Common myeloid progenitor, CD34-positive (primary cell): ENCODE measurements at regions of chr10 and their contacts with region 1.

Region 1: DNA sequence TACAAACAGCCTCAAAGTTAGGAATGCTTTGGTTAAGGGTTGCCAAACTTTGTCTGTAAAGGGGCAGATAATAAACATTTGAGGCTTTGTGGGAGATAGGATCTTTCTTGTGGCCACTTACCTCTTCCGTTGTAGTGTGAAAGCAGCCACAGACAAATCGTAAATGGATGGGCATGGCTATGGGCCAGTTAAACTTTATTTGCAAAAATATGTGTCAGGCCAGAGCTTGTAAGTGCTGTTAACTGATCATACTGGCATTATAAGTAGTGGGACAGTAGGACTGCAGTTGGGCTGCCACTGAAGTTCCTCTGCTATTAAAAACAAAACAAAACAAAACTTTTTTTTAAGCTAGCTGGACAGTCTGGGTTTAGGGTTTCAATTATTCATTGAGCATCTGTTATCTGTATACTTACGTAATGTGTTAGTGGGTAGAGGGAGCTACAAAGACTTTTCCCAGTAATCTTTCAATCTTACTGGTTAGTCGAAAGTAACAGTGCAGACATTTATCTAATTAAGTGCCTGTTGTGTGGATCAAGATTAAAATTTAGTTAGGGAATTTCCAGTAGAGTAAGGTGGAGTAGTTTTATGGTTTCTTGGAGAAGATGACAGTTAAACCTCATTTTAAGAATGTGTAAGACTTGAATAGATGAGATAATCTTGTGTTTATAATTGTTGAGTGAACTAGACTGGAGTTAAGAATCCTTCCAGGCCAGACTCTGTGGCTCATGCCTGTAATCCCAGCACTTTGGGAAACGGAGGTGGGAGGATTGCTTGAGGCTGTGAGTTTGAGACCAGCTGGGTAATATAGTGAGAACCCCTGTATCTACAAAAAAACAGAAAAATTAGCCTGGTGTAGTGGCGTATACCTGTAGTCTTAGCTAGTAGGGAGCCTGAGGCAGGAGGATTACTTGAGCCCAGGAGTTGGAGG is 100.1 kb downstream of the BTRC start:
- DNase-seq: peak; percentile 74 to 90 (median 87)
- H3K4me3 ChIP-seq: peak overlapping the region in 1 of 7 experiments; percentile 8
- H3K27ac ChIP-seq: no peak overlapping the region
- H3K4me1 ChIP-seq: peaks cover 13 to 32% (median 18%) of the 10 kb centered on the region in 4 experiments
- H3K27me3 ChIP-seq: peaks cover 0 to 65% (median 15%) of the 10 kb centered on the region in 5 experiments

Region 2: GRCh38 chr10:101467286-101467770 is 13.3 kb after region 1 on chr10:
- CTCF ChIA-PET with region 1: interaction called, 35 read pairs
- POLR2A ChIA-PET with region 1: interaction called, 3 read pairs
- DNase-seq: peak; percentile 78 to 89 (median 87)
- H3K4me3 ChIP-seq: peak overlapping the region in 1 of 7 experiments; percentile 24
- H3K27ac ChIP-seq: no peak overlapping the region
- H3K4me1 ChIP-seq: no peaks in the 10 kb centered on the region
- H3K27me3 ChIP-seq: peaks cover 0 to 3% (median 0%) of the 10 kb centered on the region in 5 experiments